ENCODE measurements at regions of chr10 and their contacts with region 1.

Region 1: GRCh38 chr10:72297968-72298773 is 24.4 kb downstream of the DDIT4 start:
- DNase-seq: peak; percentile 94
- CTCF ChIP-seq: no peak

Region 2: DNA sequence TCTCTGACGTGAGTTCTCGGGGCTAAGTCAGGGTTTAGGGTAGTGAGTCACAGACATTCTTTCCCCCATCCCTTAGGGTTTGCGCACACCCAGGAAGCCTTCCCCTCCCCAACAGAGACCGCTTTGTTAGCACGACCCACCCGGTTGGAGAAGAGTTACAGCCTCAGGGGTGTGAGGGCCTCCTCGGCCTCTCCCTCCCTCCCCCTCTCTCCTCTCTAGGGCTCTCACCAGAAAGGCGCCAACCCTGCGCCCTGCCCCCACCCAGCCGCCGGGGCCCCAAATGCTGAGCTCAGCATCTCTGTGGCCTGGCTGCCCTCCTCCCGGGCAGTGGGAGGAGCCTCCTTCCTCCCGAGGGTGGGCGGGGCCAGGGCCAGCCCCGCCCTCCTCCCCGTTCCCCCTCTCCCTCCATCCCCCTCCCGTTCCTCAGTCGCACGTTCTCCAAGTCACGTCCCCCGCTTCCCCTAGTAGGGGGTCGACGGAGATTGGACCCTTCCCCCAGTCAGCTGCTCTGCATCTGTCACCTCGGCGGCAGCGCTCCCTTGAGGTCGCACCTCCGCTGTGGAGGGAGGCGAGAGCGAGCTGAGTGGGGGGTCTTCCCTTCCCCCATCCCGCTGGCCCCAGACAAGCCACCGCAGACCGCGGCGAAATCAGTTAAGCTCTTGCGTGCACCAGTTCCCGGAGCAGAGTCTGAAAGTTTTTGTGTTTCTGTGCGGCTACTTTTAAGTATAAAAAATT is 37.4 kb before region 1 on chr10:
- CTCF ChIA-PET with region 1: interaction called, 3 read pairs
- POLR2A ChIA-PET with region 1: interaction called, 16 read pairs
- DNase-seq: peak; percentile 89
- CTCF ChIP-seq: peak; percentile 20

Region 3: DNA sequence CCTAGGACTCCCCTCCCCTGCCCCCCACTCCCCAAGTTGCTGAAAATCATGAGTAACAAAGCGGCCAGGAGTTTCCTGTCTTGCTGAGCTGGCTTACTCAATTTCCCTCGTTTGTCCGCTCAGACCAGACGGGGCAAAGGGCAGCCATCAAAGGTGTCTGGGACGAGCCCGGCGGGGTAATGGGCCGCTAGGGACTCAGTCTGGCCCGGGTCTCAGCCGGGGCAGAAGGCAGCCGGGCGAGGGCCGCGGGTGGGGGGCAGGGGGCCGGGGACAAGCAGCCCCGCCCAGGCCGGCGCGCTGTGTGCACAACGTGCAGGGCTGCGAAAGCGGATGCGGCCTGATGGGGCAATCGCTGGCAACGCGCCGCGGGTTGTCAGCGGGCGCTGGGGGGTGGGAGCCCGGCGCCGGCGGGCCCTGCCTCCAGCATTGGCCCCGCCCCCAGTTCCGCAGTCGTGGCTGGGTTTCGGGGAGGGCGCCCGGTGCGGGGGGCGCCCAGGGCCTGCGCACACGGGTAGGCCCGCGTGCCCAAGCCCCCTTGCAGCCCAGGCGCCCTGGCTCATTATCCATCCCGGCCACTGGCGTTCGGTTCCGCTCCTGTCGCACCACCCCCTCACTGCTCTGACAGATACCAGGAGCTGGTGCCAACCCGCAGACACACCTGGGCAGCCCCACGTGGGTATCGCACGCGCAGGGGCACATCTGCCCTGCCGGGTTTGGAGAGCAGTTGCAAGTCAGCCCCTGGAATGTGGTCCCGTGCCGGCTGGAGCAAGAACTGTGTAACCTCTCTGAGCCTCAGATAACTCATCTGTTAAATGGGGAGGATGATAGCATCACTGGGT is 21.5 kb after region 1 on chr10:
- CTCF ChIA-PET with region 1: interaction called, 8 read pairs
- POLR2A ChIA-PET with region 1: interaction called, 13 read pairs
- DNase-seq: peak; percentile 86
- CTCF ChIP-seq: no peak

Measured in GM10248 (cell line).